ENCODE measurements at regions of chr14 and their contacts with region 1.

Region 1: DNA sequence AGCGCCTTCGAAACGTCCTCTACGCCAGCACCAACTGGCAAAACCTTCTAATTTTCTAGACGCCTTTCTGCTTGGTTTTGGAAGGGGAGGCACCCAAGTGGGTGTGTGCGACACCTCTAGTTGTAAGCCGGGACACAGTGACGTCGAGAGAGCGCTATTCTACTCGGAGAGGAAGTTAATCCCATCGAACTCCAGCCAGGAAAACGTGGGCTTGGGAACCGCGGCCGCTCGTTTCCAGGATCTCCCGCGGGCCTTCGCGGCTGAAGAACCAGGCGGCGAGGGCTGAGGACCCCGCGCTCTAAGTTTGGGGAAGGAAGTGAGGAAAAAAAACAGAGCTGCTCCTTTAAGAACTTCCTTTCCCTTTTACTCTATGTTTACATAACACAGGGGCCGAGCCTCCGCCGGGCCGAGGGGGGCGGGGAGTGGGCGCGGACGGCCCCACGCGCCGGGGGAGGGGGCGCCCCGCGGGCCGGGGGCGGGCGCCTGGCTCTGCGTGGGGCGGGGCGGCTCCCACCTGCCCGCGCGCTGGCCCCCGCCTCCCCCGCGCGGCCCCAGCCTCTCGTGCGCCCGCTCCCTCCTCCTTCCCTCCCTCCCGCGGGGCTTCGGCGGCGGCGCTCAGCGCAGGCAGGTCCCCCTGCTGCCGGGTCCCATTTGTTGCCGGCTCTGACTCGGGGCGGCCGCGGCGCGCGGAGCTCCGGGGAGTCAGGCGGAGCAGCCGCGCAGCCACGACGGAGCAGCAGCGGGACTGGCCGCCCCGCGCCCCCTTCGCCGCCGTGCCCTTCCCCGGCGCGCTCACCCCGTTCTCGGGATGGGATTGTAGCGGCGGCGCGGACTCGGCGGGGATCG is at the start of gene PELI2:
- DNase-seq: peak; percentile 73
- ATAC-seq: peak; percentile 82
- H3K4me3 ChIP-seq: peak within 1 kb of the TSS; percentile 59
- H3K27ac ChIP-seq: peak within 1 kb of the TSS; percentile 79
- H3K4me1 ChIP-seq: peaks cover 8% of the 10 kb centered on the region
- H3K27me3 ChIP-seq: no peaks in the 10 kb centered on the region
- CTCF ChIP-seq: peak; percentile 37; the same call in 1 of the 2 replicates
- POLR2A ChIP-seq: peak; percentile 93
- RAD21 ChIP-seq: peak; percentile 32
- total RNA-seq, gene PELI2: 31.7 and 36.7 TPM in 2 replicates

Region 2: GRCh38 chr14:55430024-55430690 is 687.8 kb before region 1 on chr14:
- CTCF ChIA-PET with region 1: no interaction called
- POLR2A ChIA-PET with region 1: no interaction called
- dilution Hi-C with region 1: no loop called
- in situ Hi-C with region 1: no loop called
- intact Hi-C with region 1: loop called (anchors 10 kb)
- DNase-seq: peak; percentile 86
- ATAC-seq: peak; percentile 93
- H3K4me3 ChIP-seq: no peak overlapping the region
- H3K27ac ChIP-seq: no peak overlapping the region
- H3K4me1 ChIP-seq: no peaks in the 10 kb centered on the region
- H3K27me3 ChIP-seq: peaks cover 6% of the 10 kb centered on the region
- CTCF ChIP-seq: peak; percentile 72
- POLR2A ChIP-seq: no peak
- RAD21 ChIP-seq: peak; percentile 82

Region 3: GRCh38 chr14:55731881-55732498 is 386.0 kb before region 1 on chr14:
- CTCF ChIA-PET with region 1: no interaction called
- POLR2A ChIA-PET with region 1: no interaction called
- dilution Hi-C with region 1: no loop called
- in situ Hi-C with region 1: no loop called
- intact Hi-C with region 1: loop called (anchors 2 kb)
- DNase-seq: peak; percentile 24
- ATAC-seq: peak; percentile 66
- H3K4me3 ChIP-seq: no peak overlapping the region
- H3K27ac ChIP-seq: no peak overlapping the region
- H3K4me1 ChIP-seq: no peaks in the 10 kb centered on the region
- H3K27me3 ChIP-seq: no peaks in the 10 kb centered on the region
- CTCF ChIP-seq: peak; percentile 64
- POLR2A ChIP-seq: no peak
- RAD21 ChIP-seq: peak; percentile 72

Region 4: DNA sequence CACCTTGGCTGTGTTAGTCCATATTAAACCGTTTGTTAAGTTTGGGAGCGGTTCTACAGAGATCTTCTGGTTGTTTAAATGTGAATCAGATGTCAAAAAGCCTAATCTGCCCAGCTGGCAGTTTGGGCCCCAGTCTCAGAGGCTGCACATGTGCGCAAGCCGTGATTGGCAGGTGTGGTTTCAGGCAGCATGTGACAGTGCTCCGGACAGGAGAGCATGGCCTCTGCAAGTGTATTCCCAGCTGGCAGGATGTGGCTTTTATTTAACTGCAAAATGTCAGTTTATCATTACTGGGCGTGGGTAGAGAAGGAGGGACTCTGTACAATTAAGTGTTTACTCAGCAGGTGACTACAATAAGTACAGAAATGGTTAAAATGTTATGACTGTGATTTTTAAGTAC is 77.7 kb after region 1 on chr14:
- CTCF ChIA-PET with region 1: no interaction called
- POLR2A ChIA-PET with region 1: no interaction called
- dilution Hi-C with region 1: no loop called
- in situ Hi-C with region 1: no loop called
- intact Hi-C with region 1: loop called (anchors 5 kb)
- DNase-seq: peak; percentile 58
- ATAC-seq: no peak
- H3K4me3 ChIP-seq: no peak overlapping the region
- H3K27ac ChIP-seq: no peak overlapping the region
- H3K4me1 ChIP-seq: peaks cover 18% of the 10 kb centered on the region
- H3K27me3 ChIP-seq: no peaks in the 10 kb centered on the region
- CTCF ChIP-seq: no peak
- POLR2A ChIP-seq: no peak
- RAD21 ChIP-seq: no peak

Region 5: GRCh38 chr14:56294130-56294529 is 176.1 kb after region 1 on chr14:
- CTCF ChIA-PET with region 1: no interaction called
- POLR2A ChIA-PET with region 1: no interaction called
- dilution Hi-C with region 1: no loop called
- in situ Hi-C with region 1: no loop called
- intact Hi-C with region 1: no loop called
- DNase-seq: no peak
- ATAC-seq: peak; percentile 57; the same call in 1 of the 2 replicates
- H3K4me3 ChIP-seq: no peak overlapping the region
- H3K27ac ChIP-seq: no peak overlapping the region
- H3K4me1 ChIP-seq: no peaks in the 10 kb centered on the region; the same call in 1 of the 2 replicates
- H3K27me3 ChIP-seq: no peaks in the 10 kb centered on the region
- CTCF ChIP-seq: peak; percentile 20; the same call in 1 of the 2 replicates
- POLR2A ChIP-seq: no peak
- RAD21 ChIP-seq: peak; percentile 30; the same call in 1 of the 2 replicates

Region 6: DNA sequence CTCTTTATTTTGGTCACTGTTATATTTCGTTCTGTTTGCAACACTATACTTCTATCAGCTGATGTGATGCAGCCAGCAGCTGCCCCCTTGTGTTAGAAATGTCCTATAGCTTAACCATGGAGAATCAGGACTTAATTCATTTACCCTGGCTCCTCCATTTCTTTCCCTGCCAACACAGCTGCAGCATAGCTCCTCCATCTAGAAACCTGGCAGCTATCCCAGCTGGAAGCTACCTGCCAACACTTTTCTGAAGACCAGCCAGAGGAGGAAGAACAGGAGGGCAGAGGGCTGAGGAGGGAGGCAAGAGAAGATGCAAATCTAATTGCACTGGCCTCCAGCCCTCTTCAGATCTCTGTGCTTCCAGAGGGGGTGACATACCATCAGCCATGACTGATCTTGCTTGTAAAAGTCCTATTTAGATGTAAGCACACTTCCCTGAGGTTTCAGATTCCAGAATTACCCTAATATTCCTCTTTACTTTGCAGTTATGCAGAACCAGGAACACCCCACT is 304.8 kb after region 1 on chr14:
- CTCF ChIA-PET with region 1: interaction called, 3 read pairs
- POLR2A ChIA-PET with region 1: no interaction called
- dilution Hi-C with region 1: no loop called
- in situ Hi-C with region 1: no loop called
- intact Hi-C with region 1: loop called (anchors 2 kb)
- DNase-seq: peak; percentile 79
- ATAC-seq: peak; percentile 92
- H3K4me3 ChIP-seq: no peak overlapping the region
- H3K27ac ChIP-seq: no peak overlapping the region
- H3K4me1 ChIP-seq: peaks cover 10% of the 10 kb centered on the region; the same call in 1 of the 2 replicates
- H3K27me3 ChIP-seq: peaks cover 22% of the 10 kb centered on the region
- CTCF ChIP-seq: peak; percentile 89
- POLR2A ChIP-seq: no peak
- RAD21 ChIP-seq: peak; percentile 85

Measured in IMR-90 (cell line).